Left colon (tissue), 2 donors: ENCODE measurements at regions of chr16 and their contacts with region 1.

Region 1: DNA sequence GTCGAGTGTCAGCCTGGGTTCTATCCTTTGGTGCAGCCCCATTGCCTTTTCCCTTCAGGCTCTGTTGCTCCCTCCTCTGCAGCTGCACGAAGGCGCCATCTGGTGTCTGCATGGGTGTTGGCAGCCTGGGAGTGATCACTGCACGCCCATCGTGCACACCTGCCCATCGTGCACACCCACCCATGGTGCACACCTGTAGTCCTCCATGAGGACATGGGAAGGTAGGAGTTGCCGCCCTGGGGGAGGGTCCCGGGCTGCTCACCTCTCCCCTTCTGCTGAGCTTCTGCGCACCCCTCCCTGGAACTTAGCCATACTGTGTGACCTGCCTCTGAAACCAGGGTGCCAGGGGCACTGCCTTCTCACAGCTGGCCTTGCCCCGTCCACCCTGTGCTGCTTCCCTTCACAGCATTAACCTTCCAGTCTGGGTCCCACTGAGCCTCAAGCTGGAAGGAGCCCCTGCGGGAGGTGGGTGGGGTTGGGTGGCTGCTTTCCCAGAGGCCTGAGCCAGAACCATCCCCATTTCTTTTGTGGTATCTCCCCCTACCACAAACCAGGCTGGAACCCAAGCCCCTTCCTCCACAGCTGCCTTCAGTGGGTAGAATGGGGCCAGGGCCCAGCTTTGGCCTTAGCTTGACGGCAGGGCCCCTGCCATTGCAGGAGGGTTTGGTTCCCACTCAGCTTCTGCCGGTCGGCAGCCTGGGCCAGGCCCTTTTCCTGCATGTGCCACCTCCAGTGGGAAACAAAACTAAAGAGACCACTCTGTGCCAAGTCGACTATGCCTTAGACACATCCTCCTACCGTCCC is 2.9 kb downstream of the CTRL start:
- DNase-seq: peak; percentile 63 to 80
- ATAC-seq: peak; percentile 78

Region 2: DNA sequence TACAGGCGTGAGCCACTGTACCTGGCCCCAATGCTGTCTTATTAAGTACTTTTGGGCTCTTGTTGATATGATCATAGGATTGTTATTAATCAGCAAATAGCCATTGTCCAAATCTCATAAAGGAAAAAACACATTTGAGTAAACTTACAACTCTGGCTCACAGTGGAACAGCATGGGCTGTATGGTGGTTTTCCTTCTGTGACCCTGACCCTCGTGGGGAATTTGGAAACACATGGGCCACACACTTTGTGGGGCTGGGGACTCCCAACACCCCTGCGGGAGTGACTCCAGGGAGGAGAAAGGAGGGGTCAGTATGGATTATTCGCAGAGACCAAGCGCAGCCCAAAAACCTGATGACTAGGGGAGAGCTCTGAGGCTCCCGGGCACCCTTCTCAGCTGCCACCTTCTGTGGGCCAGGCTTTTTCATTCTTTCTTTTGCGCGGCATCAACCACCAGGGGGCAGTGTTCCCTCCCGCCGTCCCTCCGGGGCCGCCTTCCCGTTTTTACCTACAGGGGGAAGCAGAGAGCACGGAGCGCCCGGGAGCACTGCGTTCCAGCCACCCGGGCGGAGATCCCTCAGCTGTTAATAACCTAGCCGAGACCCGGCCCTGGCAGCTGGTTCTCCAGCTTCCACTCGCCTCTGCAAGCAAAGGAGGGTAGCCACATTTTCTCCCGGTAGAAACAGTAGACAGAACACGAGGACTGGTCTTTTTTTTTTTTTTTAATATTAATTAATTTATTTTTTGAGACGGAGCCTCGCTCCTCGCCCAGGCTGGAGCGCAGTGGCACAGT is 112.3 kb before region 1 on chr16:
- intact Hi-C with region 1: loop called in 1 of 2 experiments (anchors 10 kb)
- DNase-seq: peak; percentile 73 to 89
- ATAC-seq: peak; percentile 77

Region 3: GRCh38 chr16:67884684-67885083 is 44.1 kb before region 1 on chr16 and contains the start of gene NRN1L:
- intact Hi-C with region 1: loop called in 1 of 2 experiments (anchors 5 kb)
- DNase-seq: peak; percentile 79
- ATAC-seq: peak; percentile 73
- total RNA-seq, gene NRN1L: 0.67 TPM in 1 of 2 donors, not detected in the other

Region 4: GRCh38 chr16:68116256-68116867 is 187.6 kb after region 1 on chr16:
- intact Hi-C with region 1: no loop called
- DNase-seq: no peak
- ATAC-seq: peak; percentile 73